Activated CD4-positive, alpha-beta T cell treated with anti-CD3 and anti-CD28 coated beads, Interleukin-2, amount 10 ng/mL, durations not matched to agents 24 days and 14 days (primary cell): ENCODE measurements at regions of chr2 and their contacts with region 1.

Region 1: GRCh38 chr2:32553829-32554432 is 73.9 kb upstream of the TTC27 start:
- DNase-seq: peak; percentile 66
- H3K4me3 Mint-ChIP-seq: no peak overlapping the region
- H3K27ac Mint-ChIP-seq: no peak overlapping the region
- H3K4me1 Mint-ChIP-seq: no peaks in the 10 kb centered on the region
- H3K27me3 Mint-ChIP-seq: no peaks in the 10 kb centered on the region

Region 2: GRCh38 chr2:32538735-32539134 is 15.2 kb before region 1 on chr2:
- intact Hi-C with region 1: no loop called
- DNase-seq: no peak
- H3K4me3 Mint-ChIP-seq: no peak overlapping the region
- H3K27ac Mint-ChIP-seq: no peak overlapping the region
- H3K4me1 Mint-ChIP-seq: no peaks in the 10 kb centered on the region
- H3K27me3 Mint-ChIP-seq: no peaks in the 10 kb centered on the region

Region 3: DNA sequence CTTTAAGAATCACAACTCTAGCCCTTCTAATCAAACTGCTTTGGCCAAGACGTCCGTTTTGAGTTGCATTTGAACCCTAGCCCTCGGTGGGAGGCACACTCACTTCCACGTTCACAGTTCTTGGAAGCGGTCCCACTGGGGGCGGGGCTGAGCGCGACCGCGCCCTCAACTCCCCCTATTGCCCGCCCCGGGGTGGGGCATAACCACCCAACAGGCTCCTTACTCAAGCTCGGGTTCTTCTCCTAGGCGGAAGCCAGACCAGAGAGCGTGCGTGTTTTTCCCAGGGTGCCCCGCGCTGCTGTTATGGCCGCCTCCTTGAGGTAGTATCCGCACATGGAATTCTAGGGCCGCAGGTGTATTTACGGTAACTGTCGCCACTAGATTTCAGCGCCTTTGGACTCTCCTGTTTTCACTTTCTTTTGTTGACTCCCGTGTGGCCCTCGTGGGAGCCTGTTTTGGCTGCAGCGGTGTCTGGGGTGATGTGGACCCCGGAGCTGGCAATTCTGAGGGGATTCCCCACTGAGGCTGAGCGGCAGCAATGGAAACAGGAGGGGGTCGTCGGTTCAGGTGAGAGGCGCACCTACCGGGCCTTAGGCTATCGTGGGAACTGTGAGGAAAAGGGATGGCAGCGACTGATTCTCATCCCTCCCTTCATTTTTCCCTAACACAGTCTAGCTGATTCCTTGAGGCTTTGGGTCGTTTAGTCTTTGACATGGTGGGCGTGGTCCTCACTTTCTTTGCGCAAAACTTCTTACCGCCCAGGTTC is 74.1 kb after region 1 on chr2 and contains the start of gene TTC27:
- intact Hi-C with region 1: loop called (anchors 2 kb)
- DNase-seq: peak; percentile 99
- H3K4me3 Mint-ChIP-seq: peak within 1 kb of the TSS; percentile 86
- H3K27ac Mint-ChIP-seq: peak within 1 kb of the TSS; percentile 91
- H3K4me1 Mint-ChIP-seq: peaks cover 24% of the 10 kb centered on the region
- H3K27me3 Mint-ChIP-seq: no peaks in the 10 kb centered on the region
- total RNA-seq, gene TTC27: 40.8 and 46.8 TPM in 2 replicates

Region 4: DNA sequence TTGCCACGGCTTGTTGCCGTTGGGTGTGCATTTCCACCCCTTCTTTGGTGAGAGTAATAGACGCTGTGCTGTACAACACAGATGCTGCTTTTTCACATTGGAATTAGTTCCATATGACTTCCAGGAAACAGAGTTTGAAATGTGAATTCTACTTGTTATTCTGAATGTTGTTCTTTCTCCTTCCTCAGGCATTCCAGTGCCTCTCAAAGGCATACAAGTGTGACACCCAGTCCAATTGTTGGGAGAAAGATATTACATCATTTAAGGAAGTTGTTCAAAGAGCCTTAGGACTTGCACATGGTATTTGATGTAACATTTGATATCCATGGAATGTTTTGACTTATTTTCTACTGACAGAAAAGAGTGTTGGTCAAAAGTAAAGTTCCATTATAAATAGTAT is 258.4 kb after region 1 on chr2:
- intact Hi-C with region 1: no loop called
- DNase-seq: no peak
- H3K4me3 Mint-ChIP-seq: no peak overlapping the region
- H3K27ac Mint-ChIP-seq: no peak overlapping the region
- H3K4me1 Mint-ChIP-seq: no peaks in the 10 kb centered on the region
- H3K27me3 Mint-ChIP-seq: no peaks in the 10 kb centered on the region